ENCODE measurements at regions of chr6 and their contacts with region 1.

Region 1: DNA sequence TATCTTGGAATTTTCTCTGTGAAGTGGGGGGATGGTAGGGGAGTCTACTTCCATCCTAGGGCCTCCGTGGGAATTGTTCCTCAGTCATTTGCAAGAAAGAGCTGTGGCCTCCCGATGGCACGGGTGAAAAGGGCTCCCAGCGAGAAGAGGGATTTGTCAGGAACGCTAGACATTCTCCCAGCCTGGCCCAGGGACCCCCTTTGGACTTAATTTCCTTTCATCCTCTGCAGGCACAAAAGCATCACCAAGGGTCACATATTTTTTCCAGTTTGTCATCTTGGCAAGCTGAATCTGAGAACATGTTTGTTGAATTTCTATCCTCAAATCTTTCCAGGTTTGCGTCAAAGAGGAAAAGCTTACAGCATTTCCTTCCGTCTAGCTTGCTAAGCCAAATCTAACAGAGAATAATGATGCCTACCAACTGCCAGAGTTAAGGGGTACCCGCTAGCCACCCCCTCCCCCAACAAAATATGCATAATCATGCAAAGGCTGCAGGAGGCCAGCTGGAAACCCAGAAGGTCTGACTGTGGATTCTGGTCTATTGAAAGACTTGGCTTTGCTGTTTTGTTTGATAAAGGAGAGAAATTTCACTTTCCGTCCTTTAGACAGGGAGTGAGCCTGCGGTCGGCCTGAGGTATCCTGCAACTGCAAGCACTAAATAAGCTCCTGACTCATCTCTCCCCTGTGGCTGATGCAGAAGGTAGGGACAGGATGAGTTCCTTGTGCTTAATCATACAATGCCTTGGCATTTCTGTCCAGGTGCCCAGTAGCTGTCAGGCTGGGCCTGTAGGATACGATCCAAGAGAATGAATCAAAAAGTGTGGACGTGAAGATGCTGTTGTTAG is 23.1 kb downstream of the PSMG4 start:
- DNase-seq: no peak
- H3K4me3 ChIP-seq: no peak overlapping the region
- H3K27ac ChIP-seq: no peak overlapping the region
- H3K4me1 ChIP-seq: peaks cover 7% of the 10 kb centered on the region
- H3K27me3 ChIP-seq: no peaks in the 10 kb centered on the region
- CTCF ChIP-seq: no peak
- POLR2A ChIP-seq: no peak

Region 2: DNA sequence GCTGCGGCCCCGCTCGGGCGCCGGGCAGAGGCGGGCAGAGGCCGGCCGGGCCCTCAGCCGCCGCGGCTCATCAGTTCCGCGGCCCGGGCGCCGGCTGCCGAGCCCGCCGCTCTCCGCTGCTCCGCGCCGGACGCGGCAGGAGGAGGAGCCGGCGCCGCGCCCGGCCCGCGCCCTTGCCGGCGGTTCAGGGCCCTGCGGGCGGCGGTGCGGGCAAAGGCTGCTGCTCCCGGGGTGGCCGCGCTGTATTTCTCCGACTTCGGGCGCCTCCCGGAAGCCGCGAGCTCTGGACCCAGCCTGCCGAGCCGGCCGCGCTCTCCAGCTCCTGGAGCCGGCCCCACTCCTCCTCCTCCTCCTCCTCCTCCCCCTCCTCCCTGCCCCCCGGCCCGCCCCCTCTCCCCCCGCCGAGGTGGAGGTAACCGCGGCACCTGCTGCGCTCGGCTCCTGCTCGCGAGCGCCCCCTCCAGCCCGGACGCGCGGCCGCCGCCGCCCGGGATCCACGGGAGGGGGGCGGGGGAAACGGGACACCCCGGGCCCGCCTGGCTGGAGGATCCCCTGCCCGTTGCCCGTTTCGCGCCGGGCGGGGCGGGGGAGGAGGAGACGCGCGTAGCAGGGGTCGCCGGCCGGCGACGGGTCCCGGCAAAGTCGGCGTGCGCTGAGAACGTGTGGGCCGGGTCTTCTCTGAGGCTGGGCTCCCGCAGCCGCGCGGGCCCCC is 175.1 kb after region 1 on chr6 and contains the start of gene SLC22A23:
- intact Hi-C with region 1: loop called (anchors 10 kb)
- DNase-seq: peak; percentile 58
- H3K4me3 ChIP-seq: peak within 1 kb of the TSS; percentile 50 to 54
- H3K27ac ChIP-seq: peak within 1 kb of the TSS in 1 of 2 donors; percentile 4
- H3K4me1 ChIP-seq: peaks cover 9% of the 10 kb centered on the region
- H3K27me3 ChIP-seq: no peaks in the 10 kb centered on the region
- CTCF ChIP-seq: peak; percentile 21 to 85 (median 58)
- POLR2A ChIP-seq: no peak
- total RNA-seq, gene SLC22A23: 9.0 to 14.9 TPM

Region 3: DNA sequence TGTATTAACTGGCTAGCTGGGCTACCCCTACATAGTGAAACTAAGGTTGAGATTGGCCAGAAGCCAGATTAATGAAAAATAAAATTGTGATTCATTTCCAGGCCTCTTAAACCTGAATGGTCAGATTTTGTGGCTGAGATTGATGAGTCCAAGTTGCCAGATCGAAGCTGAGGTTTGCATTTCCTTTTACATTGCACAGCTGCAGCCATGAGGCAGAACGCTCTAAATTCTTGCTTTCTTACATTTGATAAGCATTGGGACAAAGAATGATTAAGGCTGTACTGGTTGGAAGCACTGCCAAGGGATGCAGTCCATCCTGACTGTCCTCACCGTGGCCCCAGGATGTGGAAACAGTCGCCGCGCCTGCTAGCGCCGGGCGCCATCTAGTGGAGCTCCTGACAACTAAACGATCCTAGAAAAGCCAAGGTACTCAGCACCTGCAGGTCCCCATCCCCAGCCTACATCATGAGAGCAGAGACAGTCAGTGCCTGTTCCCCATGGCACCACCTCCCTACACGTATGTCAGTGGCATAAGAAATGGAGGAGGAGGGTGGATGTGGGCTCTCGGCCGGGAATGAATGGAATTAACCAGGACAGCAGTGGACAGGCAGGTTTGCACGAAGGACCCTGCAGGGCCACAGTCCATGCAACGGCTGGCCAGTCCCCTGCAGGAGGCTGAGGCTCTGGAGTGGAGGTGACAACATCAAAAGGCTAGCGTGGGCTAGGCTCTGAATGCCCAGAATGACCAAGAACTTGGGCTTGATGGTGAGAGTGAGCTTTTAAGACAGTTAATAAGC is 450.7 kb after region 1 on chr6:
- intact Hi-C with region 1: loop called (anchors 5 kb)
- DNase-seq: peak; percentile 81
- H3K4me3 ChIP-seq: no peak overlapping the region
- H3K27ac ChIP-seq: no peak overlapping the region
- H3K4me1 ChIP-seq: no peaks in the 10 kb centered on the region
- H3K27me3 ChIP-seq: no peaks in the 10 kb centered on the region
- CTCF ChIP-seq: peak; percentile 29 to 82 (median 71)
- POLR2A ChIP-seq: no peak